ENCODE measurements at regions of chr15 and their contacts with region 1.

Region 1: GRCh38 chr15:85296615-85297402 is 83.6 kb upstream of the AKAP13 start:
- DNase-seq: peak; percentile 40 to 73 (median 63)
- H3K4me3 ChIP-seq: peak overlapping the region; percentile 47
- H3K4me3 Mint-ChIP-seq: peak overlapping the region in 6 of 7 donors; percentile 18 to 72 (median 52)
- H3K27ac ChIP-seq: no peak overlapping the region
- H3K27ac Mint-ChIP-seq: peak overlapping the region in 1 of 8 donors; percentile 16
- H3K4me1 ChIP-seq: peaks cover 7% of the 10 kb centered on the region
- H3K4me1 Mint-ChIP-seq: peaks cover 11 to 15% (median 12%) of the 10 kb centered on the region in 3 donors
- H3K27me3 ChIP-seq: no peaks in the 10 kb centered on the region
- H3K27me3 Mint-ChIP-seq: peaks cover 0 to 3% of the 10 kb centered on the region in 2 donors

Region 2: GRCh38 chr15:85178308-85178707 is 118.5 kb before region 1 on chr15:
- CTCF ChIA-PET with region 1: no interaction called
- POLR2A ChIA-PET with region 1: no interaction called
- DNase-seq: no peak
- H3K4me3 ChIP-seq: no peak overlapping the region
- H3K4me3 Mint-ChIP-seq: no peak overlapping the region
- H3K27ac ChIP-seq: no peak overlapping the region
- H3K27ac Mint-ChIP-seq: no peak overlapping the region
- H3K4me1 ChIP-seq: no peaks in the 10 kb centered on the region
- H3K4me1 Mint-ChIP-seq: no peaks in the 10 kb centered on the region
- H3K27me3 ChIP-seq: no peaks in the 10 kb centered on the region
- H3K27me3 Mint-ChIP-seq: peaks cover 19 to 34% of the 10 kb centered on the region in 2 donors

Region 3: DNA sequence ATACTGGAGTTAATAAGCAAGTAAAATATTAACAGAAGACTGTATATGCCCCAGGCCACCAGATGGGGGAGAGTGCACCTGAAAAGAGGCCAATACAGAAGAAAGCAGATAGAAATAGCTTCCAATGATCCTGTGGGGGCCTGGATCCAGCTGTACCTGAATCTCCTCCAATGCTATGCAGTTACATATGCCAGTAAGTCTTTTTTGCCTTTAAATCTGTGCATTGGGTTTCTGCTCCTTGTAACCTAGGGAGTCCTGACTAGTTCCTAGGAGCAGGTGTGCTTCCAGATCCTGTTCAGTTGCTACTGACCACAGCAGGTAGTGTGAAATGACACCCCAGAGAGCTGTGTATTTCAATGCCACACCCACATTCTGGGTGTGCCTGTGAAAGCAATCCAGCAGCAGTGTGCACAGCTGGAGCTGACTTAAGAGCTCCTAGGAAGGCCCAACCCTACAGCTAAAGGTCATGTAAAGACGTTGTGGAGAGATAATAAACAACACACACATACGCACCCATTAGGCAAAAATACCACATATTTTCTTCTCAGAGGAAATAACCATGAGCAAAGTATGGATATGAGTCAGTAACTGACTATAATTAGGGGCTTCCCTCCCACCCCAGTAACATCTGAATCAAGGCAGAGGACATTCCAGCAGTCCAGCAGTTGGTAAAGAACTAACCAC is 21.4 kb after region 1 on chr15:
- CTCF ChIA-PET with region 1: interaction called, 16 read pairs
- POLR2A ChIA-PET with region 1: interaction called, 3 read pairs
- DNase-seq: peak in 2 of 5 donors; percentile 12 to 59
- H3K4me3 ChIP-seq: no peak overlapping the region
- H3K4me3 Mint-ChIP-seq: peak overlapping the region in 2 of 7 donors; percentile 16 to 30
- H3K27ac ChIP-seq: no peak overlapping the region
- H3K27ac Mint-ChIP-seq: peak overlapping the region in 5 of 8 donors; percentile 22 to 70 (median 52)
- H3K4me1 ChIP-seq: peaks cover 34% of the 10 kb centered on the region
- H3K4me1 Mint-ChIP-seq: peaks cover 34 to 47% (median 46%) of the 10 kb centered on the region in 3 donors
- H3K27me3 ChIP-seq: no peaks in the 10 kb centered on the region
- H3K27me3 Mint-ChIP-seq: no peaks in the 10 kb centered on the region

Region 4: DNA sequence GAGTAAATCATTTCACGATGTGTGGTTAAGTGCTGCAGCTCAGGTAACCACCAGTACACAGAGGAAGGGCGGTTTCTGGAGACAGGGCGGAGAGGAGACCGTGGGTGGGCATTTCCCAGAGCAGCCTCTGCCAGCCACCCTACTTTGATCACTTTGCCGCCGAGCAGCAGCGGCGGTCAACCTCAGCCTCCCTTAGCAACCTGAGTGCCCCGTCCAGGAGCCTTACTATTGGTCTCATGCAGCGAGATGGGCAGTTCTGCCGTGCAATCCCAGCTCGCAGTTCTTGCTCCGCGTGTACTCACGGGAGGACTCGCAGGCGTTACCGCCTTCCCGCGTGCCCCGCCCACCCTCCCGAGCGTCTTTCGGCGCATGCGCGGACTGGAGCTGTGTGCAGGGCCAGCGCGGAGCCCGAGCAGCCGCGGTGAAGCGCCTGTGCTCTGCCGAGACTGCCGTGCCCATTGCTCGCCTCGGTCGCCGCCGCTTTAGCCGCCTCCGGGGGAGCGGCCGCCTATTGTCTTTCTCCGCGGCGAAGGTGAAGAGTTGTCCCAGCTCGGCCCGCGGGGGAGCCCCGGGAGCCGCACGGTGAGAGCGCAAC is 83.5 kb after region 1 on chr15 and contains the start of gene AKAP13:
- CTCF ChIA-PET with region 1: interaction called, 13 read pairs
- POLR2A ChIA-PET with region 1: no interaction called
- DNase-seq: peak; percentile 89 to 97 (median 94)
- H3K4me3 ChIP-seq: peak within 1 kb of the TSS; percentile 51
- H3K4me3 Mint-ChIP-seq: peak within 1 kb of the TSS; percentile 85 to 93 (median 88)
- H3K27ac ChIP-seq: peak within 1 kb of the TSS; percentile 46
- H3K27ac Mint-ChIP-seq: peak within 1 kb of the TSS; percentile 84 to 99 (median 95)
- H3K4me1 ChIP-seq: peaks cover 32% of the 10 kb centered on the region
- H3K4me1 Mint-ChIP-seq: peaks cover 49 to 67% (median 61%) of the 10 kb centered on the region in 3 donors
- H3K27me3 ChIP-seq: no peaks in the 10 kb centered on the region
- H3K27me3 Mint-ChIP-seq: peaks cover 0 to 3% of the 10 kb centered on the region in 2 donors
- total RNA-seq, gene AKAP13: 109 to 113 TPM

Region 5: GRCh38 chr15:85412956-85413854 is 116.4 kb after region 1 on chr15:
- CTCF ChIA-PET with region 1: interaction called, 79 read pairs
- POLR2A ChIA-PET with region 1: interaction called, 4 read pairs
- DNase-seq: peak; percentile 42 to 80 (median 47)
- H3K4me3 ChIP-seq: peak overlapping the region; percentile 11
- H3K4me3 Mint-ChIP-seq: peak overlapping the region; percentile 10 to 78 (median 66)
- H3K27ac ChIP-seq: no peak overlapping the region
- H3K27ac Mint-ChIP-seq: peak overlapping the region; percentile 80 to 92 (median 85)
- H3K4me1 ChIP-seq: peaks cover 27% of the 10 kb centered on the region
- H3K4me1 Mint-ChIP-seq: peaks cover 53 to 83% (median 77%) of the 10 kb centered on the region in 3 donors
- H3K27me3 ChIP-seq: no peaks in the 10 kb centered on the region
- H3K27me3 Mint-ChIP-seq: no peaks in the 10 kb centered on the region

Region 6: GRCh38 chr15:85504749-85505676 is 208.2 kb after region 1 on chr15:
- CTCF ChIA-PET with region 1: interaction called, 18 read pairs
- POLR2A ChIA-PET with region 1: no interaction called
- DNase-seq: peak in 4 of 5 donors; percentile 18 to 54 (median 26)
- H3K4me3 ChIP-seq: no peak overlapping the region
- H3K4me3 Mint-ChIP-seq: no peak overlapping the region
- H3K27ac ChIP-seq: no peak overlapping the region
- H3K27ac Mint-ChIP-seq: peak overlapping the region in 5 of 8 donors; percentile 2 to 35 (median 17)
- H3K4me1 ChIP-seq: peaks cover 20% of the 10 kb centered on the region
- H3K4me1 Mint-ChIP-seq: peaks cover 38 to 79% (median 76%) of the 10 kb centered on the region in 3 donors
- H3K27me3 ChIP-seq: no peaks in the 10 kb centered on the region
- H3K27me3 Mint-ChIP-seq: no peaks in the 10 kb centered on the region

Measured in CD8-positive, alpha-beta memory T cell (primary cell).